ENCODE measurements at regions of chrX and their contacts with region 1.

Region 1: DNA sequence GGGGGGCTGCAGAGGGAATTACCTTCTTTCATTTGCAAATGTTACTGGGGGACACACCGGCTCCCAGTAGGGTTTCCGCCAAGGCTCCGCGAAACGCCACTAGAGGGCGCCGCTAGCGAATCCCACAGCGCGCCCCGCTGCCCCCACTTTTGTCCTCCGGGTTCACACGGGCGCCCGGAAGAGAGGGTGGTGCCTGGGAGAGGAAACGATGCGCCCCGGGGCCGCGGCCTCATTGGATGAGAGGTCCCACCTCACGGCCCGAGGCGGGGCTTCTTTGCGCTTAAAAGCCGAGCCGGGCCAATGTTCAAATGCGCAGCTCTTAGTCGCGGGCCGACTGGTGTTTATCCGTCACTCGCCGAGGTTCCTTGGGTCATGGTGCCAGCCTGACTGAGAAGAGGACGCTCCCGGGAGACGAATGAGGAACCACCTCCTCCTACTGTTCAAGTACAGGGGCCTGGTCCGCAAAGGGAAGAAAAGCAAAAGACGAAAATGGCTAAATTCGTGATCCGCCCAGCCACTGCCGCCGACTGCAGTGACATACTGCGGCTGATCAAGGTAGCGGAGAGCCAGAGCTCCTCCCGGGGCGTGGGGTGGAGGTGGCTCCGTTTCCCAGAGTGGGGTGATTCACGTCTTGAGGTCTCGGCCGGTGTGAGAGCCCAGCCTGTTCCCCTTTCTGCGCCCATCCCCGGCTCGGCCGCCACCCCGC is at the start of gene SAT1:
- DNase-seq: peak; percentile 92
- H3K4me3 ChIP-seq: peak within 1 kb of the TSS; percentile 49 to 73 (median 71)
- H3K27ac ChIP-seq: peak within 1 kb of the TSS; percentile 92
- H3K4me1 ChIP-seq: peaks cover 27% of the 10 kb centered on the region
- H3K27me3 ChIP-seq: no peaks in the 10 kb centered on the region
- CTCF ChIP-seq: peak; percentile 40 to 75
- total RNA-seq, gene SAT1: 453 to 593 TPM

Region 2: DNA sequence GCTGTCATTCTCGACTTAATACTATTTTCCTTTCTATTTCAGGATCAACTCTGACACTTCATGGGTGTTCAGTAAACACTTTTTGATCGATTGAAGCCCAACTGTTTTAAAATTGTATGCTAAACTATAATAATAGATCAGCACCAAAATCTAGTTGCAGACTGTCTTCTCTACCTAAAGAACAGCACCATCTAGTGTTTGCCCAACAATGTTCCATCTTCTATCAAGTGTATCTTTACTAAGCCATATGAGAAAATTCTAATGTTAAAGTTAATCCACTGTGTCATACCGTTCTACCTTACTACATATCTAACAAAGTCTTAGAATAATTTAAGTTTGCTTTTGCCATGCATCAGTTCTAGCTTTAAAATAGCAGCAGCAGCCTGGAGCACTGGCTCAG is 228.7 kb before region 1 on chrX:
- CTCF ChIA-PET with region 1: no interaction called
- dilution Hi-C with region 1: no loop called
- in situ Hi-C with region 1: no loop called
- intact Hi-C with region 1: no loop called
- DNase-seq: peak; percentile 20
- H3K4me3 ChIP-seq: no peak overlapping the region
- H3K27ac ChIP-seq: no peak overlapping the region
- H3K4me1 ChIP-seq: no peaks in the 10 kb centered on the region
- H3K27me3 ChIP-seq: peaks cover 4% of the 10 kb centered on the region
- CTCF ChIP-seq: peak; percentile 68 to 72

Region 3: GRCh38 chrX:23694606-23695005 is 88.4 kb before region 1 on chrX:
- CTCF ChIA-PET with region 1: interaction called, 3 read pairs
- dilution Hi-C with region 1: no loop called
- in situ Hi-C with region 1: no loop called
- intact Hi-C with region 1: loop called (anchors 2 kb)
- DNase-seq: peak; percentile 30
- H3K4me3 ChIP-seq: no peak overlapping the region
- H3K27ac ChIP-seq: no peak overlapping the region
- H3K4me1 ChIP-seq: no peaks in the 10 kb centered on the region
- H3K27me3 ChIP-seq: no peaks in the 10 kb centered on the region
- CTCF ChIP-seq: peak; percentile 53 to 61

Region 4: DNA sequence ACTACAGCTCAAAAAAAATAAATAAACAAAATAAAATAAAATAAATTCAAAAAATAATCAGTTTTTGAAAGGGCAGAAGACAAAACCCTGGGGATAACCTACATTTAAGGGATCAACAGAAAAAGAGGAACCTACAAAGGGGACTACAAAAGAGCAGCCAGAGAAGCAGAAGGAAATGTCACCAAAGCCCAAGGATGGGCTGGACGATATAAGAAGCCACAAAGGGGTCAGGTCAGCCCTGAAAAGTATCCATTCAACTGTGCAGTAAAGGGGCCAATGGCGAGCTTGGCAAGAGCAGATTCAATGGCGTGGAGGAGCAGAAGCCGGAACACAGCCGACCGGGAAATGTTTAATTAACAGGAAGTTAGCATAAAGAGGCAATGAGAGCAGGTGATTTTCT is 56.8 kb before region 1 on chrX:
- CTCF ChIA-PET with region 1: no interaction called
- dilution Hi-C with region 1: no loop called
- in situ Hi-C with region 1: no loop called
- intact Hi-C with region 1: no loop called
- DNase-seq: no peak
- H3K4me3 ChIP-seq: no peak overlapping the region
- H3K27ac ChIP-seq: no peak overlapping the region
- H3K4me1 ChIP-seq: no peaks in the 10 kb centered on the region
- H3K27me3 ChIP-seq: no peaks in the 10 kb centered on the region
- CTCF ChIP-seq: no peak

Region 5: DNA sequence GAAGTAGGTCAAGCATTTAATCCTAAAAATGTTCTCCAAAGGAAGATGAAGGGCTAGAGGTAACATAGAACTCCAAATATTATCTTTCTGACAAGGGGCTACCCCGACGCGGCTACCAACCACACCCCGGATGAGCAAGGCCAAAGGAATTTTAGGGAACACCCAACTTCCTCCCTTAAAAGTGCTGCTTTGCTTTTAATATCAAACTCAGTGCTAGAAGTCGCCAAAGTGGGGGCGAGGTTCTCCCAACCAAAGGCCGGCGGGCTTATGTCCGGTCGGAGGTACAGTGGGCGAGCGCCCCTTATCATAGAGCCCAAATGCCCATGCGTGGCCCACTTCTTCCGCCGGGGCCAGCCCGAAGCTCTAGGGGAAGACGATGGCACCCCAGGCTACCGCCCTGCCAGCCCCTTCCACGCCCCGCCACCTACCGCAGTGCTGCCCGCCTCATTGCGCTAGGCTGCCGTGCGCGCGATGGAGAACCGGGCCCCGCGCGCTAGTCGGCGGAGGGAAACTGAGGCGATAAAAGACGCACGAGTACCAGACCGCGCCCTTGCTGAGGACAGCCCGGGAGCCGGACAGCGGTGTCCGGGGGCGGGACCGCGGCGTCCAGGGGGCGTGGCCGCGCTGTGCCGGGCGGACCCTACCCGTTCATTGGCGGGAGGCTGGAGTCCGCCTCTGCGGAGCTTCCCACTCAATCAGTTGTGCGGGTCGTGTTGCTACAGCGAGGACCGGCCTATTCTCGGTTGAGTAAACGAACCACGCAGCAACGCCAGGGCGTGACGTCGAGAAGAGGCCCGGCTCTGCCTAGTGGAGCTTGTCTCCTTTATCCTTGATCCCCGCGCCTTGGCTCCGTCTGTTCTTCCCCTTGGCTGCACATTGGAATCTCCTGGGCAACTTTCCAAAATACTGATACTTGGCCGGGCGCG is 40.1 kb before region 1 on chrX and contains the start of gene ACOT9:
- CTCF ChIA-PET with region 1: interaction called, 6 read pairs
- dilution Hi-C with region 1: no loop called
- in situ Hi-C with region 1: no loop called
- intact Hi-C with region 1: loop called (anchors 1 kb)
- DNase-seq: peak; percentile 81
- H3K4me3 ChIP-seq: peak within 1 kb of the TSS; percentile 56 to 88 (median 72)
- H3K27ac ChIP-seq: peak within 1 kb of the TSS; percentile 94
- H3K4me1 ChIP-seq: no peaks in the 10 kb centered on the region
- H3K27me3 ChIP-seq: no peaks in the 10 kb centered on the region
- CTCF ChIP-seq: no peak
- total RNA-seq, gene ACOT9: 57.8 to 74.1 TPM

Region 6: GRCh38 chrX:23756157-23756559 is 26.9 kb before region 1 on chrX:
- CTCF ChIA-PET with region 1: no interaction called
- dilution Hi-C with region 1: no loop called
- in situ Hi-C with region 1: no loop called
- intact Hi-C with region 1: loop called (anchors 1 kb)
- DNase-seq: peak; percentile 37
- H3K4me3 ChIP-seq: no peak overlapping the region
- H3K27ac ChIP-seq: no peak overlapping the region
- H3K4me1 ChIP-seq: no peaks in the 10 kb centered on the region
- H3K27me3 ChIP-seq: no peaks in the 10 kb centered on the region
- CTCF ChIP-seq: peak; percentile 58 to 66

Region 7: GRCh38 chrX:23819385-23820234 is 36.6 kb after region 1 on chrX:
- CTCF ChIA-PET with region 1: interaction called, 8 read pairs
- dilution Hi-C with region 1: no loop called
- in situ Hi-C with region 1: no loop called
- intact Hi-C with region 1: loop called (anchors 2 kb)
- DNase-seq: no peak
- H3K4me3 ChIP-seq: no peak overlapping the region
- H3K27ac ChIP-seq: no peak overlapping the region
- H3K4me1 ChIP-seq: no peaks in the 10 kb centered on the region
- H3K27me3 ChIP-seq: peaks cover 2% of the 10 kb centered on the region
- CTCF ChIP-seq: no peak

Region 8: DNA sequence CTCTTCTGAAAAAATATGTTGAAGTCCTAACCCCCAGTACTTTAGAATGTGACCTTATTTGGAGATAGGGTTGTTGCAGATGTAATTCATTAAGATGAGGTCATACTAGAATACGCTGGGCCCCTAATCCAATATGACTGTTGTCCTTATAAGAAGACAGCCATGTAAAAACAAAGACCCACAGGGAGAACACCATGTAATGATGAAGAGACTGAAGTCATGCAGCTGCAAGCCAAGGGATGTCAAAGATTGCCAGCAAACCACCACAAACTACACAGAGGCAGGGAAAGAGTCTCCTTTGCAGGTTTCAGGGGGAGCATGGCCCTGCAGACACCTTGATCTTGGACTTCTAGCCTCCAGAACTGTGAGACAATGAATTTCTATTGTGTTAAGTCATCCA is 162.2 kb after region 1 on chrX:
- CTCF ChIA-PET with region 1: no interaction called
- dilution Hi-C with region 1: no loop called
- in situ Hi-C with region 1: no loop called
- intact Hi-C with region 1: no loop called
- DNase-seq: no peak
- H3K4me3 ChIP-seq: no peak overlapping the region
- H3K27ac ChIP-seq: no peak overlapping the region
- H3K4me1 ChIP-seq: no peaks in the 10 kb centered on the region
- H3K27me3 ChIP-seq: peaks cover 2% of the 10 kb centered on the region
- CTCF ChIP-seq: no peak

Region 9: DNA sequence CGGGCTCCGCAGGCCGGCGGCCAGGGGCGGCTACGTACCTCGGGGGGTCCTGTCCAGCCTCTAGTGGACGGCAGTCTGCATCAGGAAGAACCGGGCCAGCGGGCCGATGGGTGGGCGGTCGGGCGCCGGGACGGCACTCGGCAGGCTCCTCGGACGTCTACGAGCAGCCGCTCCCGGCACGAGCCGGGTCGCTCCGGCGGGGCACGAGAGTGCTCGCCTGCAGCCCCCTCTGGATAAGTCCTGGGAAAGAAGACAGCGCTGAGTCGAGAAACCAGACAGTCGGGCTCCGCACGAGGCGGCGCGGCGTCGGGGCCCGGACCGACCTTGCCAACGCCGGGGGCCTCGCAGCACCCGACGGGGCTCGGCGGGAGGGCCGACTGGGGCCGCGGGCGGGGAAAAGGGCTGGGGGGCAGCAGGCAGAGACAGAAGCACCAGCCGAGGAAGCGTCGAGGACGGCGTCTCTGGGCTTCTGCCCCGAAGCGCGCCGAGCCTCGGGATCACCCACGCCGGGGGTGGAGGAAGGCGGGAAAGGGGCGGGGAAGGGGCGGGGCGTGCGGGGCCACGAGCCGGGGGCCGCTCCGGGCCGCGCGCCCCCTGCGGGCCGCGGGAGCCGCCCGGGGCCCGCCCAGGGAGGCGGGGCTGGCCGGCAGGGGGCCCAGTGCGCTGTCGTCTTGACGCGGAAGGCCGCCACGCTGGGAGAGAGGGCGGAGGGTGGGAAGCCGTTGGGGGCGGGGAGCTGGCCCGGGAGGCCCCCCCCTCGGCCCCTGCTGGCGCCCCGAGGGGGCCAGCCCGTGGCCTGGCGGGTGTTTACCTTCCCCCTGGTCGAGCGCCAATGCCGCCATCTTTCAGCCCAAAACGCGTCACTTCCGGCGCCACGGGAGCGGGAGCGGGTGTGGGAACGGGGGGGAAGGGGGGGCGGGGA is 242.1 kb after region 1 on chrX:
- CTCF ChIA-PET with region 1: no interaction called
- dilution Hi-C with region 1: no loop called
- in situ Hi-C with region 1: no loop called
- intact Hi-C with region 1: loop called (anchors 10 kb)
- DNase-seq: peak; percentile 76
- H3K4me3 ChIP-seq: peak overlapping the region; percentile 76 to 87 (median 78)
- H3K27ac ChIP-seq: peak overlapping the region; percentile 75
- H3K4me1 ChIP-seq: no peaks in the 10 kb centered on the region
- H3K27me3 ChIP-seq: no peaks in the 10 kb centered on the region
- CTCF ChIP-seq: no peak

Region 10: GRCh38 chrX:24054182-24055042 is 271.4 kb after region 1 on chrX and contains the start of gene EIF2S3:
- CTCF ChIA-PET with region 1: no interaction called
- dilution Hi-C with region 1: no loop called
- in situ Hi-C with region 1: no loop called
- intact Hi-C with region 1: loop called (anchors 1 kb)
- DNase-seq: peak; percentile 96
- H3K4me3 ChIP-seq: no peak within 1 kb of the TSS
- H3K27ac ChIP-seq: no peak within 1 kb of the TSS
- H3K4me1 ChIP-seq: no peaks in the 10 kb centered on the region
- H3K27me3 ChIP-seq: no peaks in the 10 kb centered on the region
- CTCF ChIP-seq: peak; percentile 45 to 65
- total RNA-seq, gene EIF2S3: 299 to 364 TPM

Region 11: DNA sequence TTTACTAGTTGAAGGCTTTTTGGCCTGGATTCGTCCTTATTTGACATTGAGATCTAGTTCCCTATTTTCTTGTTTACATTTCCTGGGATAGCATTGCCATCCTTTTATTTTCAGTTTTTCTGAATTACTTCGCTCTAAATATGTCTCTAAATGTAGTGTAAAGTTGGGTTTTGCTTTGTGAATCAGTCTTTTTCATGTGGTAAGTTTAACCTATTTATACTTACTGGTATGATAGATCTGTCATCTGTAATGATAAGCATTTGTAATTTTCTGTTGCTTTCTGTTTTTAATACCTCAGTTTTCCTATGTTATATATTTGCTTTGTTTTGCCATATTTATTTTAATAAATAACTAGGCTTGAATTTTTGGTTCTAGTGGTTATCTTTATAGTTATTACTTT is 688.8 kb after region 1 on chrX:
- CTCF ChIA-PET with region 1: no interaction called
- dilution Hi-C with region 1: no loop called
- in situ Hi-C with region 1: no loop called
- intact Hi-C with region 1: no loop called
- DNase-seq: no peak
- H3K4me3 ChIP-seq: no peak overlapping the region
- H3K27ac ChIP-seq: no peak overlapping the region
- H3K4me1 ChIP-seq: no peaks in the 10 kb centered on the region
- H3K27me3 ChIP-seq: no peaks in the 10 kb centered on the region
- CTCF ChIP-seq: no peak

Measured in mammary epithelial cell (primary cell).